CD14-positive monocyte (primary cell): ENCODE measurements at regions of chr3 and their contacts with region 1.

Region 1: GRCh38 chr3:3200632-3201212 is 21.2 kb upstream of the CRBN start:
- DNase-seq: peak in 2 of 3 donors; percentile 42 to 57
- H3K4me3 ChIP-seq: no peak overlapping the region
- H3K4me3 Mint-ChIP-seq: no peak overlapping the region
- H3K27ac ChIP-seq: no peak overlapping the region
- H3K27ac Mint-ChIP-seq: no peak overlapping the region
- H3K4me1 ChIP-seq: no peaks in the 10 kb centered on the region
- H3K4me1 Mint-ChIP-seq: no peaks in the 10 kb centered on the region
- H3K27me3 ChIP-seq: no peaks in the 10 kb centered on the region
- H3K27me3 Mint-ChIP-seq: no peaks in the 10 kb centered on the region
- CTCF ChIP-seq: peak; percentile 75

Region 2: GRCh38 chr3:3015185-3016089 is 185.3 kb before region 1 on chr3:
- intact Hi-C with region 1: no loop called
- DNase-seq: no peak
- H3K4me3 ChIP-seq: no peak overlapping the region
- H3K4me3 Mint-ChIP-seq: no peak overlapping the region
- H3K27ac ChIP-seq: no peak overlapping the region
- H3K27ac Mint-ChIP-seq: no peak overlapping the region
- H3K4me1 ChIP-seq: no peaks in the 10 kb centered on the region
- H3K4me1 Mint-ChIP-seq: no peaks in the 10 kb centered on the region
- H3K27me3 ChIP-seq: no peaks in the 10 kb centered on the region
- H3K27me3 Mint-ChIP-seq: peaks cover 0 to 5% (median 2%) of the 10 kb centered on the region in 3 donors
- CTCF ChIP-seq: no peak

Region 3: DNA sequence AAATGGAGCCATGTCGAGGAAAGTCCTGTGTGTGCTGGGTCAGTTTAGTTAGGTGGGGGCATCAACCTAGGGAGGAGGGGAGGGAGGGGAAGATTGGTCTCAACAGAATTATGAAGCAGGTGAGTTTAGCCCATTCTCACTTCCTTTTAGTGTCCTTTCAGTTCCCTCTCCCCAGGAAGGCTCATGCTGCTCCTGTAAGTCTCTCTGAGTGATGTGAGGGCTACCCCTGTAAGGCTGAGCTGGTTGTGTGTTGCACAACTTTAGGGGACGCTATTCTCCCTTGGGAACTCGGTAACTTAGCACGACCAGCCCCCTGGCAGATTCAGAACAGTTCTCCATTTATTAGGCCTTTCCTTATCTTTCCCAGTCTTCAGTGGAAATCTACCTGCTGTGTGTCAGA is 111.7 kb before region 1 on chr3:
- intact Hi-C with region 1: no loop called
- DNase-seq: no peak
- H3K4me3 ChIP-seq: no peak overlapping the region
- H3K4me3 Mint-ChIP-seq: no peak overlapping the region
- H3K27ac ChIP-seq: no peak overlapping the region
- H3K27ac Mint-ChIP-seq: no peak overlapping the region
- H3K4me1 ChIP-seq: no peaks in the 10 kb centered on the region
- H3K4me1 Mint-ChIP-seq: peaks cover 5% of the 10 kb centered on the region
- H3K27me3 ChIP-seq: no peaks in the 10 kb centered on the region
- H3K27me3 Mint-ChIP-seq: peaks cover 0 to 4% (median 2%) of the 10 kb centered on the region in 3 donors
- CTCF ChIP-seq: no peak

Region 4: GRCh38 chr3:3160826-3161225 is 39.9 kb before region 1 on chr3:
- intact Hi-C with region 1: no loop called
- DNase-seq: no peak
- H3K4me3 ChIP-seq: no peak overlapping the region
- H3K4me3 Mint-ChIP-seq: no peak overlapping the region
- H3K27ac ChIP-seq: no peak overlapping the region
- H3K27ac Mint-ChIP-seq: peak overlapping the region in 3 of 7 donors; percentile 34 to 68 (median 40)
- H3K4me1 ChIP-seq: no peaks in the 10 kb centered on the region
- H3K4me1 Mint-ChIP-seq: no peaks in the 10 kb centered on the region
- H3K27me3 ChIP-seq: no peaks in the 10 kb centered on the region
- H3K27me3 Mint-ChIP-seq: no peaks in the 10 kb centered on the region
- CTCF ChIP-seq: no peak

Region 5: DNA sequence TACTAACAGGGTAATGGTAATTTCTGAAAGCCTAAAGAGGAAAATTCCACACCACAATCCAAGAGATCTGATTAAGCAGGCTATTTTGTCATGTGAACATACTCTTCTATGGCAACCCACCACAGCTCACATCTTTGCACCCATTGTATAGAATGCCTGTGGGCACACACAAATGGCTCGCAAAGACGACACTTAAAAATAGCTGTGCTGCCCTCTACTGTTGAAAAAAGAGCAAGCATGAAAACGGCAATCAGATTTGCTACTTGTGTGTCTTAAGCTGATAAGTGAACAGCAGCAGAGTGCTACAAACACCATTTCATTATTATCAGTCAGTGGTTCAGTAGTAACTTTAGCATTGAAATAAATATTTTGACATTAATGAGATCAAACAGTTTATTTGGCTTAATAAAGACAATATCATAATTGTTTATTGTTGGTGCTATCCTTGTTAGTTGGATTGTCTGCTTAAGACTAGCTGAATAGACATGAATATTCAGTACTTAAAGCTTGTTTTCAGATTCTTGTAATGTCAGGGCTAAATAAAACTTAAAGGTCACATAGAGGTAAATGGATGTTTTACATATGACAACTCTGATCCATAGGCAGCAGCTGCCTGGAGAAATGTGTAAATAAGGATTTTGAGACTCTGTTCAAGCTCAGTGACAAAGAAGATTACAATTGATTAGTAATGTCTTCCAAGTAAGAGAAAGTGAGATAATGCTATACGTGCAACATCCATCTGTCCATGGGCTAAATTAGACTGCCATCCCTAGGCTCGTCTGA is 797.6 kb after region 1 on chr3:
- intact Hi-C with region 1: loop called (anchors 10 kb)
- DNase-seq: peak in 2 of 3 donors; percentile 3 to 23
- H3K4me3 ChIP-seq: no peak overlapping the region
- H3K4me3 Mint-ChIP-seq: no peak overlapping the region
- H3K27ac ChIP-seq: no peak overlapping the region
- H3K27ac Mint-ChIP-seq: no peak overlapping the region
- H3K4me1 ChIP-seq: no peaks in the 10 kb centered on the region
- H3K4me1 Mint-ChIP-seq: no peaks in the 10 kb centered on the region
- H3K27me3 ChIP-seq: no peaks in the 10 kb centered on the region
- H3K27me3 Mint-ChIP-seq: no peaks in the 10 kb centered on the region
- CTCF ChIP-seq: peak; percentile 75

Region 6: DNA sequence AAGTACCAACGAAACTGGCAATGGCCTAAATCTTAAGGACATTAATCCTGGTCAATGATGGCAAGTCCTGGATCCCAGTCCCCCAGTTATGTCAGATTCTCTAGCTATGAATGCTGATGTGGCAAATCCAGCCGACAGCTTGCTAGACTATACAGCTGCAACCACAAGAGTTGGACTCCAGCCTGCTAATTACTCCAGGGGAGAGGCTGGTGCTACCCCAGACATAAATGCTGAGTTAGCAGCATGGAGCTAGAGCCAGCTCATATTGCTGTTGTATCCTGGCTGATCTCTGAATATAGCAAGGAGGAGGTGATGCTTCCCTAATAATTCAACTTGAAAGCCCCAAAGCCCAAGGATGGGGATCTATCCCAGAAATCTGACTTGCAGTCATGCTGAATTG is 805.6 kb after region 1 on chr3:
- intact Hi-C with region 1: loop called in 1 of 2 experiments (anchors 10 kb)
- DNase-seq: no peak
- H3K4me3 ChIP-seq: no peak overlapping the region
- H3K4me3 Mint-ChIP-seq: no peak overlapping the region
- H3K27ac ChIP-seq: no peak overlapping the region
- H3K27ac Mint-ChIP-seq: no peak overlapping the region
- H3K4me1 ChIP-seq: no peaks in the 10 kb centered on the region
- H3K4me1 Mint-ChIP-seq: peaks cover 6% of the 10 kb centered on the region
- H3K27me3 ChIP-seq: no peaks in the 10 kb centered on the region
- H3K27me3 Mint-ChIP-seq: peaks cover 0 to 2% (median 0%) of the 10 kb centered on the region in 3 donors
- CTCF ChIP-seq: no peak

Region 7: GRCh38 chr3:4290272-4290893 is 1089.7 kb after region 1 on chr3:
- intact Hi-C with region 1: loop called (anchors 5 kb)
- DNase-seq: peak; percentile 18 to 43 (median 36)
- H3K4me3 ChIP-seq: no peak overlapping the region
- H3K4me3 Mint-ChIP-seq: no peak overlapping the region
- H3K27ac ChIP-seq: no peak overlapping the region
- H3K27ac Mint-ChIP-seq: no peak overlapping the region
- H3K4me1 ChIP-seq: no peaks in the 10 kb centered on the region
- H3K4me1 Mint-ChIP-seq: peaks cover 2% of the 10 kb centered on the region
- H3K27me3 ChIP-seq: no peaks in the 10 kb centered on the region
- H3K27me3 Mint-ChIP-seq: no peaks in the 10 kb centered on the region
- CTCF ChIP-seq: peak; percentile 95